Left lung (tissue), 14 donors: ENCODE measurements at regions of chr4 and their contacts with region 1.

Region 1: DNA sequence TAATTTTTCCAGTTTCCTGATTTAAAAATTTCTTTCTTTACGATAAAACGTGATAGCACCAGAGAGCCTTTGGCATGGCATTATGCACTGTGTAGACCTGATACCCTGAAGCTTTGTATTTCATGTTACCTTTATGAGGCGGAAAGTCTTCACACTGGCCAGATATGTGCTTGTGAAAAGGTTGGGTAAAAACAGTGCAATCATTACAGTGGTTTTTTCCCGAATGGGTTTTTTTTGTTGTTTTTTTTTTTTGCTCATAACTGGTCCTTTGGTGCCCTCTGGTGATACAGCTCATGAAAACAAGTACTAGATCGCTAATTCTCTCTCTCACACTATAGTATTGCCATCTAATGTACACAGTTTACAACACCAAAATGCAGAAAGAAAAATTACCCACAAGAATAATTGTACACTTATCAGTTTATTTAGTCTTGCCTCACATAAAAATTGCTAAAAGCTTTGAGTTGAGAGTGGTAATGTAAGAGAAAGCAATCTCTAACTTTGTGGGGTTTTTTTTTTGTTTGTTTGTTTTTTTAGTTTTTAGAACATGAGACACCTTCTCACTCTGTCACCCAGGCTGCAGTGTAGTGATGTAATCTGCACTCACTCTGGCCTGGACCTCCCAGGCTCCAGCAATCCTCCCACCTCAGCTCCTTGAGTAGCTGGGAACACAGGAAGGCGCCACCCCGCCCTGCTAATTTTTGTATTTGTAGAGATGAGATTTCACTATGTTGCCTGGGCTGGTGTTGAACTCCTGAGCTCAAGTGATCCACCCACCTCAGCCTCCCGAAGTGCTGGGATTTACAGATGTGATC is 21.3 kb downstream of the SPCS3 start:
- DNase-seq: peak in 3 of 4 donors; percentile 28 to 63 (median 57)
- ATAC-seq: peak; percentile 90
- H3K4me3 ChIP-seq: no peak overlapping the region
- H3K27ac ChIP-seq: no peak overlapping the region
- H3K4me1 ChIP-seq: peaks cover 0 to 8% of the 10 kb centered on the region in 2 donors
- H3K27me3 ChIP-seq: no peaks in the 10 kb centered on the region
- CTCF ChIP-seq: peak; percentile 26 to 45

Region 2: DNA sequence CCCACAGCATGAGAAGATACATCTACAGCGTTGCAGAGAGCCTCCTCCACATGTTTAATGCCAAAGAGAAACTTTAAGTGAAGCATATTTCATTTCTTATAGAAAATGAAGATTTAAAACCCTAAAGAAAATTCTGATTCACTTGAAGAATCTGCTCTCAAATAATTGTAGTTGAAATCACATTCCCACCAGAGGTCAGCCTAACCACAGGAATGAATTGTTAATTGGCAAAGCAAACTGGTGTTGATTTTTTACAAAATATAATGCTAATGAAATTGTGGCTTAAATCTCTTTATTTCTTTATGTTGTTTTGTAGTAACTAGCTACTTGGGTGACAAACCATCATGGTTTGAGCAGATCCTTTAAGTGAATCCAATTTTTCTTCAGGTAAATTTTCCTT is 306.6 kb before region 1 on chr4:
- intact Hi-C with region 1: loop called in 1 of 2 experiments (anchors 10 kb)
- DNase-seq: peak in 1 of 4 donors; percentile 63
- ATAC-seq: peak; percentile 42
- H3K4me3 ChIP-seq: no peak overlapping the region
- H3K27ac ChIP-seq: no peak overlapping the region
- H3K4me1 ChIP-seq: no peaks in the 10 kb centered on the region
- H3K27me3 ChIP-seq: no peaks in the 10 kb centered on the region
- CTCF ChIP-seq: peak in 1 of 2 donors; percentile 31

Region 3: GRCh38 chr4:176150356-176150682 is 190.8 kb before region 1 on chr4:
- intact Hi-C with region 1: loop called in 1 of 2 experiments (anchors 10 kb)
- DNase-seq: peak in 1 of 4 donors; percentile 5
- ATAC-seq: no peak
- H3K4me3 ChIP-seq: no peak overlapping the region
- H3K27ac ChIP-seq: no peak overlapping the region
- H3K4me1 ChIP-seq: no peaks in the 10 kb centered on the region
- H3K27me3 ChIP-seq: no peaks in the 10 kb centered on the region
- CTCF ChIP-seq: no peak